ENCODE measurements at regions of chr12 and their contacts with region 1.

Region 1: GRCh38 chr12:6752921-6753771 is at the start of gene MLF2:
- DNase-seq: peak; percentile 93
- H3K4me3 ChIP-seq: peak within 1 kb of the TSS; percentile 98
- H3K27me3 ChIP-seq: no peaks in the 10 kb centered on the region
- CTCF ChIP-seq: no peak
- polyA plus RNA-seq, gene MLF2: 287 and 345 TPM in 2 replicates

Region 2: GRCh38 chr12:6723607-6724396 is 29.3 kb before region 1 on chr12 and contains the start of gene COPS7A:
- CTCF ChIA-PET with region 1: interaction called, 16 read pairs
- POLR2A ChIA-PET with region 1: interaction called, 3 read pairs
- DNase-seq: peak; percentile 93
- H3K4me3 ChIP-seq: peak within 1 kb of the TSS; percentile 52
- H3K27me3 ChIP-seq: no peaks in the 10 kb centered on the region
- CTCF ChIP-seq: no peak
- polyA plus RNA-seq, gene COPS7A: 128 and 200 TPM in 2 replicates

Region 3: GRCh38 chr12:6764011-6764828 is 11.1 kb after region 1 on chr12:
- CTCF ChIA-PET with region 1: interaction called, 103 read pairs
- POLR2A ChIA-PET with region 1: interaction called, 14 read pairs
- DNase-seq: peak; percentile 98
- H3K4me3 ChIP-seq: peak overlapping the region; percentile 24
- H3K27me3 ChIP-seq: no peaks in the 10 kb centered on the region
- CTCF ChIP-seq: no peak

Region 4: DNA sequence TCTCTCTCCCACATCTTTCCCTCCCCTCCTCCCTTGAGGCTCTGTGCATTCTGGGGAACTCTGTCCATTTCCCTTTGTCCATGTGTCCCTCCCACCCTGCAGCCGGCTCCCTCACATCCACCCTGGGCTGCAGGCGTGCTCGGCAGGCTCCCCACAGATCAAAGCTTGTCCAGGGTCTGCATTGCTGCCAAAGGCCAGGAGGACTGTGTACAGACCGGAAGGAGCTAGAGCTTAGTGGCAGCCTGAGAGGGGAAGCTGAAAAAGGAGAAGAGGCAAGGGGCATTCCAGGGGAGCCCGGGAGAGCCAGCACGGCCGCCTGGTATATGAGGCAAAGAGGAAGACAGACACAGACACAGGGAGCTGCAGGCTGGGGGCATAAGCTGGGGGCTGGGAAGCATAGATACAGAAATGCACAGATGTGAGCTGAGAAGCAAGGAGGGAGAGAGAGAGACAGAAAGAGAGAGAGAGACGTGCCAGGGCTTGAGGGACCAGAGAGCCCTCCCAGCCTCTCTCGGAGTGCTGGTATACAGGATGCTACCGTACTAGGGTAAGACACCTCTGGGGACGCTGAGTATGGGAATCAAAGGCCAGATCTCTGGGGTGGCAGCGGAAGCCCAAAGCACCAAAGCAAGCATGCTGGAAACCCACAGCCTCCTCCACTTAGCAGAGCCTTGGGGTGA is 39.5 kb after region 1 on chr12:
- CTCF ChIA-PET with region 1: interaction called, 14 read pairs
- POLR2A ChIA-PET with region 1: no interaction called
- DNase-seq: no peak
- H3K4me3 ChIP-seq: no peak overlapping the region
- H3K27me3 ChIP-seq: peaks cover 2% of the 10 kb centered on the region; the same call in 1 of the 2 replicates
- CTCF ChIP-seq: no peak

Region 5: DNA sequence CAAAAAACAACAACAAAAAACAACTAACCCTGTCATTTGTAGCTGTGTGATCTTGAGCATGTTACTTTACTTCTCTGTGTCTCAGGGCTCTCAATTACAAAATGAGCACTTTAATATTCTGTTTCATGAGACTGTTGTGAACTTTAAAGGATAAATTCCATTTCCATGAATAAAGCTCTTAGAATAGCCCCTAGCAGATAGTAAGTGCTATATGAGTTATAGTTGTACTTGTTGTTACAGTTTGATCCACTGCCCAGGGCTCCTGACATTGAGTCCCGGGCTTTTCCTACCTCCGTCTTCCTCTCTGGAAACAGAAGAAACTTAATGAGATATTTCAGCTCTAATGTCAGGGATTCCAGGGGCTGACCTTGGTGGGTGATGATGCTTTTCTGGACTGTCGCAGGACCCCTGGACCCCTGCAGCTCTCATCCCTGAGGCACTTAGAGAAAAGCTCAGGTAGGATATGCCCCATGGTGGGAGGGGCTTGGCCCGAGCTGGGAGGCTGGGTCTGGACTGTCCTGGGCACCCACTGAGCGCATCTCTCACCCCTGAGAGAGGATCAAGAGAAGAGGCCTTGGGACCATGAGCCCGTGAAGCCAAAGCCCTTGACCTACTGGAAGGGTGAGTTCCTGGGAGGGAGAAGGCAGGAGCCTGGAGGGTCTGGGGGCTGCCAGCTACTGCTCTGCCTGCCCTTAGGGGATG is 80.2 kb after region 1 on chr12:
- CTCF ChIA-PET with region 1: interaction called, 92 read pairs
- POLR2A ChIA-PET with region 1: no interaction called
- DNase-seq: no peak
- H3K4me3 ChIP-seq: no peak overlapping the region
- H3K27me3 ChIP-seq: no peaks in the 10 kb centered on the region
- CTCF ChIP-seq: no peak

Measured in BJ (cell line).